Right ventricle myocardium inferior (tissue), 1 donor: ENCODE measurements at regions of chr1 and their contacts with region 1.

Region 1: GRCh38 chr1:170145770-170146676 is at the start of gene NTMT2:
- DNase-seq: peak; percentile 63
- ATAC-seq: peak; percentile 95
- total RNA-seq, gene NTMT2: 5.3 TPM

Region 2: DNA sequence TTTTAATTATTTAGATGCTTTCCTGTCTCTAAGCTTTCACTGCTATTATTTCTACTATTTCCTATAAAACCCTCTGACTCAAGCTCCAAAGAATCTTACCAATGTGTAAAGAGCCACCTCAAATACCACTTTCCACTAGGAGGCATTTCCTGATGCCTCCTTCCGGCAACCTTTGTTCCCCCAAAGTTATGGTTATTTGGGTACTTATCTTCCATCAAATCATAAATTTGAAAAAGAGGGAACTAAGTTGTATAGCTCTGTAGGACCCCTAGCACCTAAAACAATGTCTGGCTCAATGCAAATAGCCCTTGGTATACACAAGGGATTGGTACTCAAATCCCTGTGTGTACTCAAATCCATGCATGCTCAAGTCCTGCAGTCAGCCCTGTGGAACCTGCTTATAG is 858.0 kb before region 1 on chr1:
- intact Hi-C with region 1: no loop called
- DNase-seq: no peak
- ATAC-seq: no peak

Region 3: DNA sequence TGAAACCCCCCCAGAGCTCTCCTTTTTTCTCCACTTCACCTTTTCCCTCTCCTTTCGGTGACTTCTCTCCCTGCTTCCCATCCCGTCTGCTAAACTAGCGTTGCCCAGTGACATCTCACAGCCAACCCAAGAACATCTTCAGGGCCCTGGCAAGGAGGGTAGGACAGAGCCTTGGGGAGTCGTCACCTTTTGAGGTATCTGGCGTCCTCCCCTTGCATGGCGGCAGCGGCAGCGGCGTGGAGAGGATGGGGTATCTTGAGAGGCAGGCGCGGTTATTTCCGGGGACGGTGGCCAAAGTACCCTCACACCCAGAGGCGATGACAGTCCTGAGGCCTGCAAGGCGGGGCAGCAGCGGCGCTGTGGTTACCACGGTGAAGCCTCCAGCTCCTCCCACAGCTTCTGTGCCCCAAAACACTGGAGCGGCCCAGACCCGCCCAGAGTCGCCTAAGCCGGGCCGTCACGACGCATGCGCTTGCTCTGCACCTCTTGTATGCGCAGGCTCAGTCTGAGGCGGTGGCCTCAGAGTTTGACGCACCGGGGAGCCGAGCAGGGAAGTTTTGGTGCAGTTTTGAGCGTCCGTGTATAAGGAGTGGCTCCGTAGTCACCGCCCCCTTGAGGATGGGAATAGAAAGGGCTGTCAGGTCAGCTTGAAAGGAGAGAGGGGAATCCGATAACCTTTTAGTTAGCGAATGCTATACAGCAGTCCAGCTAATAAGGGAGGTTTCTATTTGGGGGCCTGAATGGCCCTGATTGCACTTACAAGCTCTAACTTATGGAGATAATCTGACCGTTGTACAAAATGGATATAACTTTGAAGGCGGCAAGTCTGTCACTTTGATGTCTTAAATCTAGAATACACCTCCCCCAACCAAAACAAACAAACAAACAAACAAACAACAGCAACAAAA is 71.5 kb before region 1 on chr1 and contains the start of gene KIFAP3:
- intact Hi-C with region 1: loop called (anchors 2 kb)
- DNase-seq: peak; percentile 99
- ATAC-seq: peak; percentile 100
- total RNA-seq, gene KIFAP3: 31.0 TPM

Region 4: DNA sequence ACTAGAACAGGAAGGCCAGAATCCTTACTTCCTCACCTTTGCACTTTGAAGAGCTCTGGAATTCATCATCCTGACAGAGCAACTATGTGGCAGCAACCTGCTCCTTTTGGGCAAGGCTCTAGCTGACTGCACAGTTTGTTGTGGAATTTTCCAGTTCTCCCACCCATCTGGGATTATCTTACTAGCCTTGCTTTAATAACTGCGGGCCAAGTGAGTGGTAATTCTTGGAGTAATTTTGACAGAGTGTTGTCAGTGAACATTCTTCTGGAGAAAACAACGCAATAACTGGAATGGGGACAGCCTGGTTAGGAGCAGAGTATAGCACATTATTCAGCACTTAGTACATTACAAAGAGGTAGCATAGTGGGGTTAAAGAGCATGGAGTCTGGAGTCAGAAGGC is 75.0 kb after region 1 on chr1:
- intact Hi-C with region 1: loop called (anchors 5 kb)
- DNase-seq: no peak
- ATAC-seq: peak; percentile 84